ENCODE measurements at regions of chr3 and their contacts with region 1.

Region 1: DNA sequence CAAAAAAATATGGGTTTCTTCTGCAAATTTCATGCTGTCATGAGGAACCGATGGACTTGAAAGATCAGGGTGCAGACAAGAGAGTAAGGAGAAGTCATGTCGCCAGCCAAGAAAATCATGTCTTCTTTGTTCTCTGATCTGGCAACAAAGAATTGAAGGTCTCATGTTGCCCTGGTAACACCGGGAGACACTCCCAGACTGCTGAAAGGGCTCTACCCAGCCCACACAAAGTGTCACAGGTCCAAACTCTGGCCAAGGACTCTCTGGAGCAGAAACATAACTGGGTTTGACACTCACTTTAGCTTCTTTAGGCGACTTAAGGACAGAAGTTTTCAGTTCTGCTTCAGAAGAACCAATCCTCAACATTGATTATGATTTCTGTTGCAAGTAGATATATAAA is 42.9 kb downstream of the SIDT1 start:
- DNase-seq: no peak
- ATAC-seq: no peak
- H3K4me3 Mint-ChIP-seq: no peak overlapping the region
- H3K27ac Mint-ChIP-seq: peak overlapping the region; percentile 31
- H3K4me1 Mint-ChIP-seq: peaks cover 5% of the 10 kb centered on the region
- H3K27me3 Mint-ChIP-seq: no peaks in the 10 kb centered on the region
- CTCF ChIP-seq: no peak

Region 2: DNA sequence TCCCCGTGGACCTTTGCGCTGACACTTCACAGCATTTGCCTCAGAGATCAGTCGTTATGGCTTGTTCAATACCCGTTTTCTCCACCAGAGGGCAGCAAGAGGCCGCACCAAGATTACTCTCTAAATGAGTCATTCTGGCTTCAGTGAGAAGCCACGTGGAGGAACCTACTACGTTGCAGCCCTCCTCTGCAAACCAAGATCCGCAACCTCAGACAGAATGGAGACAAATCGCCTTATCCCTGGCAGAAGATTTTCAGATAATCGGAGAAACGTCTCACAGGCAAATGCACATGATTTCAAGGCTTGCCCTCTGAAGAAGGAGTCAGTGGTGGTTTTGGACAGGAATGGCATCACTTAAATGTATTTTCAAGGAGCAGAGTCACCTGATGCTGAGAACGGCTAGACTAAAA is 523.9 kb before region 1 on chr3:
- CTCF ChIA-PET with region 1: no interaction called
- POLR2A ChIA-PET with region 1: no interaction called
- intact Hi-C with region 1: loop called (anchors 1 kb)
- DNase-seq: peak; percentile 68
- ATAC-seq: peak; percentile 99
- H3K4me3 Mint-ChIP-seq: no peak overlapping the region
- H3K27ac Mint-ChIP-seq: no peak overlapping the region
- H3K4me1 Mint-ChIP-seq: peaks cover 3% of the 10 kb centered on the region
- H3K27me3 Mint-ChIP-seq: no peaks in the 10 kb centered on the region
- CTCF ChIP-seq: no peak

Region 3: DNA sequence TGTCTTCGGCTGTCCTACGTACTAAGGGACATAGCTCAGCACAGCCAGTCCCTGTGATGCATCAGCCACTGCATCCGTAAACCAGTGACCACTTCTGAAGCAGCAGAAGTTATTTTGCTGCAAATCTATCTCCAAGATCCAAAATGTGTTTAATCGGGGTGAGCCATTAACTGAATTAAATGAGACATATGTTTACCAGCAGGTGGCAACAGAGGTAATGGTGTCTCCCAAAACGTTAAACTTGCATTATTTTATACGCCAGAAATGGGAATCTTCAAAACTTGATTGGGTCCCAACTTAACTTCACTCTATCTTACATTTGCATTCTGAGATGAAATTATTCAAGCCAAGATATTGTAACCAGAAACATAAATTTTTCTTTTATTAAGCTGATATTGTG is 439.1 kb before region 1 on chr3:
- CTCF ChIA-PET with region 1: no interaction called
- POLR2A ChIA-PET with region 1: no interaction called
- intact Hi-C with region 1: loop called (anchors 5 kb)
- DNase-seq: no peak
- ATAC-seq: no peak
- H3K4me3 Mint-ChIP-seq: no peak overlapping the region
- H3K27ac Mint-ChIP-seq: no peak overlapping the region
- H3K4me1 Mint-ChIP-seq: no peaks in the 10 kb centered on the region
- H3K27me3 Mint-ChIP-seq: no peaks in the 10 kb centered on the region
- CTCF ChIP-seq: no peak

Region 4: DNA sequence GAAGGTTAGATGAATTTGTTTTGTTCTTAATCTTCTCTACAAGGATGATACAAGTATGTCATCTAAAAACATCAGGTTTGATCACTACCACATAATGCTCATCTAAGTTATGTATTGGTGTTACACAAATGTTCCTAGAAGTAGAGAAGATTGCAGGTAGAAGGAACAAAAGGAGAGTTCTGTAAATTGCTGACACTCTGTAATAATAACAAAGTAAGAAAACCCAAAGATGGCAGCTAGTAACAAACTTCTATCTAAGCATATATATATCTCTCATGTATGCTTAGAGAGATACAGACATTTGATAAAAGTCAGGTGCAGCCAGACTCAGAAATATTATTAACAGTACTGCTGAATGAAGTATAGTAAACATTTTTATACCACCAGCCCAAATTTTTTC is 113.7 kb before region 1 on chr3:
- CTCF ChIA-PET with region 1: no interaction called
- POLR2A ChIA-PET with region 1: no interaction called
- intact Hi-C with region 1: no loop called
- DNase-seq: no peak
- ATAC-seq: no peak
- H3K4me3 Mint-ChIP-seq: no peak overlapping the region
- H3K27ac Mint-ChIP-seq: no peak overlapping the region
- H3K4me1 Mint-ChIP-seq: no peaks in the 10 kb centered on the region
- H3K27me3 Mint-ChIP-seq: no peaks in the 10 kb centered on the region
- CTCF ChIP-seq: no peak

Region 5: DNA sequence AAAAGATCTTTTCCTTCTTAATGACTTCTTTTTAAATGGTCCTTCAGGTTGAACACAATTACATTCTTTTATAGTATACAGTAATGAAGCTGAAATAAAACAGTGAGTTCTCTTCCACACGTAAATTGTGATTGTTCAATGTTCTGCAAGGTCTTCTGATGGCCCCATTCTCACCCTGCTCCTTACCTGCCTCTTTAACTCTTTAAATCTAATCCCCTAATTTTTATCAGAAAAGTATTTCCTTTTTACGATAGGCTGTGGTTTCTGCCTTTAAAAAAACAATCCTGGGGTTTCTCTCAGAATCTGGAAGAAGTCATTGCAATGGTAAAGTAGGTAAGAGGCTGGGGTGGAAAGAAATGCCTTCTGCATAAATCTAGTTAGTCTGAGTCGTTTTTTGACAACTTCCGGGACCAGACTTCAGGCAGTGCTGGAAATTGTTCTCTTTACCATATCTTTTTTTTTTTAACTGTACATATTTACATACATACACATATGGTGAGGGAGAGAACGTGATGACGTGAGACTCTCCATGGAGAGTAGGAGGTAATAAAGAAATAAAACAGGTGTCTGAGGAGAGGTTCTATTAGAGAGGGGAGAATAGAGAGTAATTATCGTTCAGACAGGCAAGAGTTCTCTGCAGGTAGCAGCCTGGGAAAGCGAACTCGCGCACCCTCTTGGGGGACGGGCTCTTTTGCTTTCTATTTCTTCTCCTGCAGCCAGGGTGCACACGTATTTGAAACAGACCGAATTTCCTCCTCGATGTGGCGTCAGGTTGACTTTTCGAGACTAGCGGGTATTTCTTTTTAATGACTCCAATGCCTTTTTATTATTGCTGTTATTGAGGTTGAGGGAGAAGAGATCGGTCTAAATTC is 43.1 kb before region 1 on chr3 and contains the start of gene SIDT1:
- CTCF ChIA-PET with region 1: interaction called, 4 read pairs
- POLR2A ChIA-PET with region 1: interaction called, 4 read pairs
- intact Hi-C with region 1: loop called (anchors 1 kb)
- DNase-seq: peak; percentile 49
- ATAC-seq: peak; percentile 80
- H3K4me3 Mint-ChIP-seq: peak within 1 kb of the TSS; percentile 98
- H3K27ac Mint-ChIP-seq: peak within 1 kb of the TSS; percentile 100
- H3K4me1 Mint-ChIP-seq: peaks cover 47% of the 10 kb centered on the region
- H3K27me3 Mint-ChIP-seq: peaks cover 2% of the 10 kb centered on the region
- CTCF ChIP-seq: no peak
- total RNA-seq, gene SIDT1: 35.7 and 44.9 TPM in 2 replicates

Region 6: GRCh38 chr3:113552851-113553250 is 22.4 kb before region 1 on chr3:
- CTCF ChIA-PET with region 1: interaction called, 13 read pairs
- POLR2A ChIA-PET with region 1: no interaction called
- intact Hi-C with region 1: loop called (anchors 2 kb)
- DNase-seq: no peak
- ATAC-seq: peak; percentile 84
- H3K4me3 Mint-ChIP-seq: no peak overlapping the region
- H3K27ac Mint-ChIP-seq: no peak overlapping the region
- H3K4me1 Mint-ChIP-seq: peaks cover 17% of the 10 kb centered on the region
- H3K27me3 Mint-ChIP-seq: no peaks in the 10 kb centered on the region
- CTCF ChIP-seq: no peak

Region 7: DNA sequence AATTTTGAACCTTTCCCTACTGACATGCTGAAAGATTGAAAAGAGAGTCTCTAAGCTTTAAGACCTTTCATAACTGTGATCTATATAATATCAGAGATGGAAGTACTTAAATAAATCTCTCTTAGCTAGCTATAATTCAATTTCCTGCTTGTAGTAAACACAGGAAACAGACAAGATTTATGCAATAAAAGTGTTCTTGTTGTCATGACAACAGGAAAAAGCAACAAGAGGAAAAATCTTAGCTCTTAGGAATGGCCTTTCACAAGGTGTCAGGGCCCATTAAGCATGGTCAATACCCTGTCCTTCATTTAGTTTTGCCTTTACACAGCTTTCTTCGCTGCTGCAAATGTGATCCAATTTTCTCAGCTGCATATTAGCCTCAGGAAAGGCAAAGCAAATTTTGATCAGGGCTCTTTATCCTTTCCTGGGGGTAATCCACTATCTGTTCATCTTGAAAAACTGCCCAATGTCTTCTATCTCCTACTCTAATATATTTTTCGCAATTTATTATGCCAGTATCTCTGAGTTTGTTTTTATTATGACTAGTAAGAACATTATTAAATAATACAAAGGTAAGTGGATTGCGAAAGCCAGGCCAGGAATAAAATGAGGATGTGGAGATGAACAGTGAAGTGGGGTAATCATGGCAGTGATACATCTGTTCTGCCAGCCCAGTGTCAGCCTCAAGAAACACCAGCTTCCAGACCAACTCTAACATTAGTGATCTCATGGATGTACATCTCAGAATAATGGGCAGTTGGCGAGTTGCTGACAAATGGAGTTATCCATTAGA is 14.2 kb before region 1 on chr3:
- CTCF ChIA-PET with region 1: interaction called, 13 read pairs
- POLR2A ChIA-PET with region 1: no interaction called
- intact Hi-C with region 1: no loop called
- DNase-seq: no peak
- ATAC-seq: no peak
- H3K4me3 Mint-ChIP-seq: no peak overlapping the region
- H3K27ac Mint-ChIP-seq: no peak overlapping the region
- H3K4me1 Mint-ChIP-seq: peaks cover 17% of the 10 kb centered on the region
- H3K27me3 Mint-ChIP-seq: no peaks in the 10 kb centered on the region
- CTCF ChIP-seq: no peak